HEK293T (cell line): ENCODE measurements at regions of chr5 and their contacts with region 1.

Region 1: DNA sequence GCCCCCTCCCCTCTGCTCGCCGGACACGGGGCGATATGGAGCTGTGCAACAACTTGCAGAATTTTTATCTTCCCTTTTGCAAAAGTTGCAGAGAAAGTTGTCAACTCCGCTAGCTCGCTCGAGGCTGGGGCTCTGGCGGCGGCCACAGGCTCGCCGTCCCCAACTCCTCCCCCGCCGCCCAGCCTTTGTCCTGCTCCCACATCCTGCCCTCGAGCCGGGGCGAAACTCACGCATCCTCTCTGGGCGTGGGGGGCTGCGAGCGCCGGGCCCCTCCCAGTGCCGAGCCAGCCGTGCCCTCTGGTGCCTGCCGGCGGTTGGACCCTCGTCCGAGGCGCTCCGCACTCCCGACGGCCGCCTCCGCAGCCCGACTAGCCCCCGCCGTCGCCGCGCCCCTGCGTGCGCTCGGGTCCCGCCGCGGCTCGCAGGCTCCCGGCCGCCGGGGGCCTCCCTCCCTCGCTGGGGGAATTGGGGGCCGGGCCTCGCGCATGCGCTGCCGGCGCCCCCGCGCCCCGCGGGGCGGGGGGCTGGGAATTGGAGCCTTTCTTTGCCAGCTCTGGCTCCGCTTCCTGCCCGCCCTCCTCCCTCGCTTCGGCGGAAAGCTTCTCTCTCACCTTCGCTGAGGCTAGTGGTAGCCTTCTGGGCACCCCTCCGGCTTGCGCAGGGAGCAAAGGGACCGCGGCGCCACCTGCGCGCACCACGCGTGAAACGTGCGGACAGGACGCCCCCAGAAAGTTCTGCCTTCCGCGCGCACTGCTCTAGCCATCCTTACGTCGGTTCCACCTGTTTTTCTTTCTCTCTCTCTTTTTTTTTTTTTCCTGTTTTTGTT is at the start of gene CCNJL:
- DNase-seq: peak; percentile 81

Region 2: DNA sequence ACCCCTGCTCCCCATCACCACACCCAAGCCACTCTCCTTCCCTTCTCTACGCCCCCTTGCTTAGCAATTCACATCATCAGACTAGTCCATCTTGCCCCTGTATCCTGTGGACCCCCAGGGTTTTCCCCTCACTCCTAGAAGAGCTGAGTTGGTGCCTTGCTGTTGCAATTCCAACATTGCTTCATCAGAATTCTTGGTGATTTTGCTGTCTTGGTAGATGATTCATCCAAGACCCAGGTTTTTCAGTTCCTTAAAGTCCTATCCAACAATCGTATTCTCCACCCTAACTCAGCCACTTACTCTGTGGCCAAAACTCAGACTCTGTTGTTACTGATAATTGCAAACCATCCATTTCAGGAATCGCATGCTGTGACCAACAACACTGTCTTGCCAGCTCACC is 21.4 kb after region 1 on chr5:
- CTCF ChIA-PET with region 1: interaction called, 11 read pairs
- POLR2A ChIA-PET with region 1: no interaction called
- DNase-seq: no peak